Activated CD4-positive, alpha-beta T cell treated with anti-CD3 and anti-CD28 coated beads for 36 hours (primary cell): ENCODE measurements at regions of chr12 and their contacts with region 1.

Region 1: DNA sequence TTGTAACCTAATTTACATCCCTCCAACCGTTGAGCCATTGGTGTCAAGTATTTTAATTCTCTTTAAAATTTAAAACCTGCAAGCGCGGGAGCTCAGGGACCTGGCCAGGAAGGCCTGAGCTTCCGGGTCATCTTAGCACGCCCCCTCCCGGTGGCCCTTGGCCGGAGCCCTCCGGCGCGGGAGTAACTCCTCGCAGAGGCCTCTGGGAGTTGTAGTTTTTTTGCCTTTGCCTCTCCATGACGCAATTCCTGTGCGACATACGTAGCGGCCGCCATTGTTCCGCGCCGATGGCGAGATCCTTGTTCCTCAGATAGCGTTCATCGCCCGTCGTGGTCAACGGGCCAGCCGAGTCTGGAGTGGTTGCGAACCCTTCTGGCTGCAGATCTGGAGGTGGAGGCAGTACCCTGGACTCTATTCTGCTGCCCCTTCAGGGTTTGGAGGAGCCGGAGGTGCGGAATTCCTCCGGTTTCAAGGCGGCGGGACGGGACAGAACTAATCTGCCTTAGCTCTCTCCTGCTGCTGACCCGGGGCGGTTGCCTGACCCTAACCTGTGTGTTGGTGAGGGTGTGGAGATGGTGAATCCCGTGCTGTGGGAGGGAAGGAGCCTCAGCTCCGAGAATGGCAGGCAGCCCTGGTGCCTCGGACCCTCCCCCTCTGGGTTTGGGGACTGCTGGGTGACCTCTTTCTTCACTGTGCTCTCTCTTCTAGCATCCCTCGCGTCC is at the start of gene ZNF268:
- DNase-seq: peak; percentile 95
- ATAC-seq: peak; percentile 96
- H3K4me3 Mint-ChIP-seq: peak within 1 kb of the TSS; percentile 90
- H3K27ac Mint-ChIP-seq: peak within 1 kb of the TSS; percentile 95
- H3K4me1 Mint-ChIP-seq: peaks cover 11% of the 10 kb centered on the region
- H3K27me3 Mint-ChIP-seq: no peaks in the 10 kb centered on the region
- total RNA-seq, gene ZNF268: 14.0 to 14.6 TPM

Region 2: DNA sequence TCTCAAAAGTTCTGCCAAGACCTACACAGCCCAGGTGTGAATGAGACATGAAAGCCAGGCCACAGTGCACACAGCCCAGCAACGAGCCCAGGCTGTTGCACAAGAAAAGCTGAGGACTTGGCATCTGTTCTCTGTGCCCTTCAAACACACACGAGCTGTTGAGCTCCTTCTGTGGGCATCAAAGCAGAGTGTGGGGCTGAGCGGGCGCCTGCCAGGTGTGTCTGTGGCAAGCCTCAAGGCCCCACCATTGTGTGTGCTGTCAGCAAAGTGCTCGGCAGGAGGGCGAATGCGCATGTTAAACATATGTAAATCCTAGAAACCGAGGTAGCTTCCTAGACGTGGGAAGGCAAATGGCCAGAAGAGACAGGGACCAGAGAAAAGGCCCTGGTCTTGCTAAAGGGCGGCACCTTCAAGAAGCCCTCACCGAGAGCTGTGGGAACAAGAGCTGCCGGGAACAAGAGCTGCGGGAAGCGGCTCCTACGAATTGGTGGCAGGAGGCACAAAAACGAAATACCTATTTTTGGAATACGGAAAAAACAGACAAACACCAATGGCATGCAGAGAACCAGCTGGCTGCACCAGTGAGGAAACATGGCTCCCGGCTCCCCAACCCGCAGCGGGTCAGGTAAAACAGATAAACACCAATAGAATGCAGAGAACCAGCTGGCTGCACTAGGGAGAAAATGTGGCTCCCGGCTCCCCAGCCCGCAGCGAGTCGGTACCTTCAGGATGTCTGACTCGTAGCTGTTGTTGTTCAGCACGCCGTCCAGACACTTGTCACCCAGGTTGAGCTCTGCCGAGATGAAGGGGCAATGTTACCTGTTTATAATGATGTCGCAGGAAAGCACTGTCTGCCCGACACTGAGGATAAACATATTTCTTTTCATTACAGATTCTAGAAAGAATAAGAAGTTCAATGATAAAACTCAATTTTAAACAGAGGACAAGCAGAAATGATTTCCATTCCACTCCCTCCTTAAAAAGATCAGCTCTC is 333.7 kb before region 1 on chr12:
- CTCF ChIA-PET with region 1: no interaction called
- POLR2A ChIA-PET with region 1: no interaction called
- intact Hi-C with region 1: no loop called
- DNase-seq: no peak
- ATAC-seq: no peak
- H3K4me3 Mint-ChIP-seq: no peak overlapping the region
- H3K27ac Mint-ChIP-seq: no peak overlapping the region
- H3K4me1 Mint-ChIP-seq: peaks cover 3% of the 10 kb centered on the region
- H3K27me3 Mint-ChIP-seq: no peaks in the 10 kb centered on the region

Region 3: DNA sequence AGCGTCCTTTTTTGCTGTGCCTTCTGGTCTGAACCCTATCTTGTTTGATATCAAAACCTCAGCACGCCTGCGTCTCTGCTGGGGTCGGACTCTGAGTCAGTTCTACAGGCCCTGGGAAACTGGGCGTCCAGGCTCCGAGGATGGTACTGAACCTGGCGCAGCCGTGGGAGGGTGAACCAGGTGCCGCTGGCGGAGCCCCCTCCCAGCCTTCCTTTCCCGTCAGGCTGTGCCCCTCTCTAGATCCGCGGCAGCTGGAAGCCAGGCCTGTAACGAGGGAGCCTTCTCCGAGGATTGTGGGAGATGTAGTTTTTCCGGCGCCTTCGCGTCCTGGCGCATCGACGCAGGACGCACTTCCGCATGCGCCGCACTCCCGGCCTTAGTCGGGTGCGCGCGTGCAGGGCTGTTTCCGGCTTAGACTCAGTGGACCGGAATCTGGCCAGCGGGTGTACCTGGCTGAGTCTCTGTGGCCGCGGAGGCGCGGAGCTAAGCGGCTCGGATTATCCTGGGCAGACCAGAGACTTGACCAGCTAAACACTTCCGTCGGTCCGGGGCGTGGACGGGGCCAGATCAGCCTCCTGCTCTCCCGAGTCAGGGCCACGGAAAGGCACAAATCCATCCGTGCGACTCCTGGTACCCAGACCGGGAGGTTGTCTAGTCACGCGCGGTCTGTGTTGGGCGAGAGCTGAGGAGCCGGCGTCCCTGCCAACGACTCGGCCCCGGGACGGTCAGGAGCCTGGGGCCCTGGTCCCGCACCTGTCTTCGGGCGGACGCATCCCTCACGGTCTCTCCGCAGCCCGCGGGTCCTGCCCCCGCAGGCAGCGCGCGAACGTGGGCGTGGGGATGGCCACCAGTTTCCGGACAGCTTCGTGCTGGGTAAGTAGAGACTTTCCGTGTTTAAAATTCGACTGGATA is 195.1 kb before region 1 on chr12 and contains the start of gene ZNF26:
- CTCF ChIA-PET with region 1: interaction called, 5 read pairs
- POLR2A ChIA-PET with region 1: no interaction called
- intact Hi-C with region 1: loop called (anchors 1 kb)
- DNase-seq: peak; percentile 94
- ATAC-seq: peak; percentile 97
- H3K4me3 Mint-ChIP-seq: peak within 1 kb of the TSS; percentile 79
- H3K27ac Mint-ChIP-seq: peak within 1 kb of the TSS; percentile 96
- H3K4me1 Mint-ChIP-seq: peaks cover 26% of the 10 kb centered on the region
- H3K27me3 Mint-ChIP-seq: peaks cover 4% of the 10 kb centered on the region
- total RNA-seq, gene ZNF26: 12.3 to 17.0 TPM